GM12878 (cell line): ENCODE measurements at regions of chr21 and their contacts with region 1.

Region 1: GRCh38 chr21:30315698-30316097 is 4.4 kb downstream of the KRTAP26-1 start:
- DNase-seq: no peak
- ATAC-seq: no peak
- H3K4me3 ChIP-seq: no peak overlapping the region
- H3K27ac ChIP-seq: no peak overlapping the region
- H3K4me1 ChIP-seq: no peaks in the 10 kb centered on the region
- H3K27me3 ChIP-seq: no peaks in the 10 kb centered on the region
- CTCF ChIP-seq: no peak
- EP300 ChIP-seq: no peak
- POLR2A ChIP-seq: no peak
- RAD21 ChIP-seq: no peak

Region 2: GRCh38 chr21:30257773-30258172 is 57.9 kb before region 1 on chr21:
- CTCF ChIA-PET with region 1: no interaction called
- POLR2A ChIA-PET with region 1: no interaction called
- RAD21 ChIA-PET with region 1: no interaction called
- SMC1A ChIA-PET with region 1: no interaction called
- in situ Hi-C with region 1: loop called (anchors 10 kb)
- intact Hi-C with region 1: no loop called
- DNase-seq: no peak
- ATAC-seq: peak; percentile 66
- H3K4me3 ChIP-seq: no peak overlapping the region
- H3K27ac ChIP-seq: no peak overlapping the region
- H3K4me1 ChIP-seq: no peaks in the 10 kb centered on the region
- H3K27me3 ChIP-seq: no peaks in the 10 kb centered on the region
- CTCF ChIP-seq: no peak; a peak in 1 of 6 replicates
- EP300 ChIP-seq: no peak
- POLR2A ChIP-seq: no peak
- RAD21 ChIP-seq: no peak